Activated T-helper 1 cell treated with anti-CD3 and anti-CD28 coated beads, Interleukin-12 subunit alpha, Interleukin-12 subunit beta, Interleukin-2, Interleukin-4 antibody, amounts not matched to agents 30 ng/mL and 10 ng/mL and 1 ng/mL, durations not matched to agents 14 hours and 24 hours and 36 hours (primary cell): ENCODE measurements at regions of chr18 and their contacts with region 1.

Region 1: DNA sequence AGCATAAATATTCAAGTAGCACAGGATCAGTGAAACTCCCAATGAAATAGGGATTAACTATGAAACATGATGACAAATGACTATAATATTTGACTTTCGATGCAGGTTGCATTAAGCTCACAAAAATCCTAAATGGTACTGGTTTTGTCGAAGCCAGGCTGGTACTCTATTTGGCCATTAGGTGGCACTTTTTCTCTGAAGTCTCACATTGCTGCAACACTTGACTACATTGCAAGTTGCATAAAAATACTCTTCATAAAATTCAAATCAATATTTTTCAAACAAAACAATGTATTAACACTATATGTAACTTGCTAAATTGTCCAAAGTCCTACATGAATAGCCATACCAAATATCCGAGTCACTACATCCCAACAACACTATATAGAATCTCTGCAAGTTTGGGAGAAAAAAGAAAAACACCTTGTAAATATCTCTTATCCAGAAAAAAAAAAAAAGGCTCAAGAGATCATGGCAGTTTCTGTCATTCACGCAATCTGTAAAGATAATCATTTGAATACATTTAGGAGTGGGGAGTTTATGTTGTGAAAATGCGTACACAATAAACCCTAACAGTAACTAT is 9.5 kb downstream of the RTTN start:
- DNase-seq: no peak
- H3K4me3 Mint-ChIP-seq: no peak overlapping the region
- H3K27ac Mint-ChIP-seq: no peak overlapping the region
- H3K4me1 Mint-ChIP-seq: peaks cover 20% of the 10 kb centered on the region
- H3K27me3 Mint-ChIP-seq: no peaks in the 10 kb centered on the region

Region 2: GRCh38 chr18:70431203-70431624 is 235.3 kb after region 1 on chr18:
- intact Hi-C with region 1: loop called (anchors 1 kb)
- DNase-seq: no peak
- H3K4me3 Mint-ChIP-seq: no peak overlapping the region
- H3K27ac Mint-ChIP-seq: no peak overlapping the region
- H3K4me1 Mint-ChIP-seq: no peaks in the 10 kb centered on the region
- H3K27me3 Mint-ChIP-seq: peaks cover 3% of the 10 kb centered on the region

Region 3: GRCh38 chr18:70454704-70455322 is 258.9 kb after region 1 on chr18:
- intact Hi-C with region 1: loop called (anchors 1 kb)
- DNase-seq: peak; percentile 4
- H3K4me3 Mint-ChIP-seq: no peak overlapping the region
- H3K27ac Mint-ChIP-seq: no peak overlapping the region
- H3K4me1 Mint-ChIP-seq: no peaks in the 10 kb centered on the region
- H3K27me3 Mint-ChIP-seq: peaks cover 4% of the 10 kb centered on the region